IMR-90 (cell line): ENCODE measurements at regions of chr3 and their contacts with region 1.

Region 1: DNA sequence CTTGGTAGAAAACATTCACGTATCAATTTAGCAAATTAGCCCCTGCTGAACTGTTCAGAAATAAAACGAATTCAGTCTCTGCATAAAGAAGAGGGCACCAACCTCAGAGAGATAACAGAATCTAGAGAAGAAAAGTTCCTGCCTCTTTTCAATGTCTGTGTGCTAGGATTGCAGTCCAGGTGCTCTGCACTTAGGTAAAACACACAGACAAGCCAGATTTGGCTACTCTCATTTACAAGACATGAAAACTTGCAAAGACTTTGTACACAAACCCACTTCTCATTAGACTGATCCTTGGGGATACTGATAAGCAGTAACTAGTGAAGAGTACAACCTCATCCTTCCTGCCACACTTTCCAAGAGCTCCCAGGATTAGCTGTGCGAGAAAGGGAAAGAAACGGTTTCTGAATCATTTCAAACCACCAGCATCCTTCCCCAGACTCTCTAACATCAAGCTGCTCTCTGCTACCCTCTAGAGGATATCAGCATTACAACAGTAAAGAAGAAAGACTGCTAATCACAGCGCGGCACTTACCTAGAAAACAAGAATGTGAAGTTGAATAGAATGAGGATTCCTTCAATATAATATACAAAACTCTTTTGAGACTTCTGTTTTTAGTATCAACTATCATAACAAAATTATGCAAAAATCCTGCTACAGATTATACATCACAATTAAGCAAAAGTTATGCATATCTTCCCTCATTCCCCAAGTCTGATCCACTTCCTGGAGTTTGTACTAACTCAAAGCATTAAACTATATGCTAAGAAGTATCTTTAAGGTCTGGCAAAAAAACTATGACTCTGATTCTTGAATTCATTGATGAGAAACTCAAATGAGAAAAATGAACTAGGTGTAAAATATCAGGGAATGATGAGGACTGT is 306.4 kb downstream of the MAGI1 start:
- DNase-seq: peak; percentile 80
- ATAC-seq: peak; percentile 86
- H3K4me3 ChIP-seq: no peak overlapping the region
- H3K27ac ChIP-seq: no peak overlapping the region
- H3K4me1 ChIP-seq: peaks cover 8% of the 10 kb centered on the region
- H3K27me3 ChIP-seq: no peaks in the 10 kb centered on the region
- CTCF ChIP-seq: peak; percentile 82
- POLR2A ChIP-seq: no peak
- RAD21 ChIP-seq: peak; percentile 88

Region 2: GRCh38 chr3:65342084-65342683 is 390.1 kb before region 1 on chr3:
- CTCF ChIA-PET with region 1: no interaction called
- POLR2A ChIA-PET with region 1: no interaction called
- dilution Hi-C with region 1: no loop called
- in situ Hi-C with region 1: loop called (anchors 10 kb)
- intact Hi-C with region 1: loop called (anchors 2 kb)
- DNase-seq: peak; percentile 55
- ATAC-seq: peak; percentile 75
- H3K4me3 ChIP-seq: no peak overlapping the region
- H3K27ac ChIP-seq: no peak overlapping the region
- H3K4me1 ChIP-seq: no peaks in the 10 kb centered on the region
- H3K27me3 ChIP-seq: peaks cover 14% of the 10 kb centered on the region
- CTCF ChIP-seq: peak; percentile 60
- POLR2A ChIP-seq: no peak
- RAD21 ChIP-seq: peak; percentile 67

Region 3: GRCh38 chr3:65425880-65426279 is 306.4 kb before region 1 on chr3:
- CTCF ChIA-PET with region 1: no interaction called
- POLR2A ChIA-PET with region 1: no interaction called
- dilution Hi-C with region 1: no loop called
- in situ Hi-C with region 1: loop called (anchors 5 kb)
- intact Hi-C with region 1: no loop called
- DNase-seq: peak; percentile 44
- ATAC-seq: peak; percentile 77
- H3K4me3 ChIP-seq: no peak overlapping the region
- H3K27ac ChIP-seq: no peak overlapping the region
- H3K4me1 ChIP-seq: no peaks in the 10 kb centered on the region
- H3K27me3 ChIP-seq: no peaks in the 10 kb centered on the region
- CTCF ChIP-seq: peak; percentile 48
- POLR2A ChIP-seq: no peak
- RAD21 ChIP-seq: peak; percentile 49

Region 4: DNA sequence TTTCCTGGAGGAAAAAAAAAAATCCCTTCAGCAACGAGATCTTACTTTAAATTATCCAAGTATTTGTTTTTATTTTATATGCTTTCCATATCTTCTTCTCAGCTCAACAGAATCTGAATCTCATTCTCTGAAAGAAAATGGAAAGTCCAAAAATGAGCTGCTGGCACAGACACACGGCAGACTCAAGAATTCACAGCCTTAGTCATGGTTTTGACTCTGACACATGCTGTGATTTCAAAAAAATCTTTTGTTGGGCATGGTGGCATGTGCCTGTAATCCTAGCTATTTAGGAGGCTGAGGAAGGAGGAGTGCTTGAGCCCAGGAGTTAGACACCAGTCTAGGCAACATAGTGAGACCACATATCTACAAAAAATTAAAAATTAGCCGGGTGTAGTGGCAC is 258.6 kb before region 1 on chr3:
- CTCF ChIA-PET with region 1: no interaction called
- POLR2A ChIA-PET with region 1: no interaction called
- dilution Hi-C with region 1: no loop called
- in situ Hi-C with region 1: no loop called
- intact Hi-C with region 1: no loop called
- DNase-seq: peak; percentile 47
- ATAC-seq: 0 out of 2 replicates have a peak, but pooled peaks have one; percentile 24
- H3K4me3 ChIP-seq: no peak overlapping the region
- H3K27ac ChIP-seq: no peak overlapping the region
- H3K4me1 ChIP-seq: no peaks in the 10 kb centered on the region
- H3K27me3 ChIP-seq: no peaks in the 10 kb centered on the region
- CTCF ChIP-seq: no peak
- POLR2A ChIP-seq: no peak
- RAD21 ChIP-seq: no peak

Region 5: GRCh38 chr3:65627102-65627501 is 105.2 kb before region 1 on chr3:
- CTCF ChIA-PET with region 1: interaction called, 12 read pairs
- POLR2A ChIA-PET with region 1: no interaction called
- dilution Hi-C with region 1: no loop called
- in situ Hi-C with region 1: no loop called
- intact Hi-C with region 1: no loop called
- DNase-seq: peak; percentile 39
- ATAC-seq: no peak
- H3K4me3 ChIP-seq: no peak overlapping the region
- H3K27ac ChIP-seq: no peak overlapping the region
- H3K4me1 ChIP-seq: no peaks in the 10 kb centered on the region
- H3K27me3 ChIP-seq: no peaks in the 10 kb centered on the region
- CTCF ChIP-seq: no peak
- POLR2A ChIP-seq: no peak
- RAD21 ChIP-seq: no peak

Region 6: GRCh38 chr3:65672871-65673815 is 59.1 kb before region 1 on chr3:
- CTCF ChIA-PET with region 1: interaction called, 5 read pairs
- POLR2A ChIA-PET with region 1: no interaction called
- dilution Hi-C with region 1: no loop called
- in situ Hi-C with region 1: no loop called
- intact Hi-C with region 1: loop called (anchors 1 kb)
- DNase-seq: peak; percentile 57
- ATAC-seq: peak; percentile 68
- H3K4me3 ChIP-seq: no peak overlapping the region
- H3K27ac ChIP-seq: no peak overlapping the region
- H3K4me1 ChIP-seq: no peaks in the 10 kb centered on the region
- H3K27me3 ChIP-seq: no peaks in the 10 kb centered on the region
- CTCF ChIP-seq: peak; percentile 66
- POLR2A ChIP-seq: no peak
- RAD21 ChIP-seq: peak; percentile 69